Dendritic cell treated with granulocyte-macrophage colony-stimulating factor and Interleukin-4, amounts not matched to agents 40 ng/mL and 50 ng/mL, for 4 days (primary cell): ENCODE measurements at regions of chr12 and their contacts with region 1.

Region 1: GRCh38 chr12:14618983-14619382 is 51.3 kb upstream of the PLBD1 start:
- H3K4me3 Mint-ChIP-seq: no peak overlapping the region
- H3K27ac Mint-ChIP-seq: no peak overlapping the region
- H3K4me1 Mint-ChIP-seq: peaks cover 34% of the 10 kb centered on the region
- H3K27me3 Mint-ChIP-seq: no peaks in the 10 kb centered on the region

Region 2: DNA sequence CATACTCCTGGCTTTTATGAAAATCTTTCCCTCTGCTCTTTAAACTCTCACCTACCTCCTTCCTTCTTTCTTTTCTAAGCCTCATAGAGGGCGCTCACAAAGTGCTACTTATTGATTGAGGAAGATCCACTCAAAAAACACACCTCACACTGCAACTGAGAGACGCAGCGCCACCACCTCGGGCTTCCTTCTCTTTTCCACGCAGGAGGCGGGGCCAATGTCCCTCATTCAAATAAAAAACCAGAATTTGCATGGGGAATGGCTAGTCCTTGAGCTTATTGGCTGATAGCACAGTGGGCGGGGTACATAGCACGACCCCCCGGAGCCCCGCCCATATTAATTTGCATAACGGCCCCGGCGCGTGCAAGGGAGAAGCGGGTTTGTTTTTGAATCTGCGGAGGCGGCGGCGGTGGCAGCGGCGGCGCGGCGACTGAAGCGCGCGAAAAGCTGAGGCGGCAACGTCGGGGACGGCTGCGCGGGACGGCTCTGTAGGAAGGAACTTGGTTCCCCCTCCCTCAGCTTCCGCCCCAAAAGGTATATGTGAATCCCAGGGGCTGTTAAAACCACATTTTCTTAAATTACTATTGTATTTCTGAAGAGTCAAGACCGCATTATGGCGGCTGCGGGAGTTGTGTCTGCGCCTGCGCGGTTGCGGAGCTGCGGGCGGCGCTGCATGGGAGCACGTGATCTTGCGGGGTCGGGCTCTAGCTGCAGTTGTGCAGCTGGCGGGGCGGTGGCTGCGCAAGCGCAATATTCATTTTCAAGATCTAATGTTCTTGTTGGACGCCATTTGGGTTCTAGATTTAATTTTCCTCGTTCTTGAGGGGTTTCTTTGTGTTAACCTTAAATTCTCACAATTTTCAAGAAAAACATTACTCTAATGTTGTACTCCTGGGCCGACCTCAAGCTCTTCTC is 253.4 kb before region 1 on chr12 and contains the start of gene ATF7IP:
- intact Hi-C with region 1: loop called (anchors 10 kb)
- H3K4me3 Mint-ChIP-seq: peak within 1 kb of the TSS; percentile 74
- H3K27ac Mint-ChIP-seq: peak within 1 kb of the TSS; percentile 84
- H3K4me1 Mint-ChIP-seq: peaks cover 6% of the 10 kb centered on the region
- H3K27me3 Mint-ChIP-seq: no peaks in the 10 kb centered on the region

Region 3: DNA sequence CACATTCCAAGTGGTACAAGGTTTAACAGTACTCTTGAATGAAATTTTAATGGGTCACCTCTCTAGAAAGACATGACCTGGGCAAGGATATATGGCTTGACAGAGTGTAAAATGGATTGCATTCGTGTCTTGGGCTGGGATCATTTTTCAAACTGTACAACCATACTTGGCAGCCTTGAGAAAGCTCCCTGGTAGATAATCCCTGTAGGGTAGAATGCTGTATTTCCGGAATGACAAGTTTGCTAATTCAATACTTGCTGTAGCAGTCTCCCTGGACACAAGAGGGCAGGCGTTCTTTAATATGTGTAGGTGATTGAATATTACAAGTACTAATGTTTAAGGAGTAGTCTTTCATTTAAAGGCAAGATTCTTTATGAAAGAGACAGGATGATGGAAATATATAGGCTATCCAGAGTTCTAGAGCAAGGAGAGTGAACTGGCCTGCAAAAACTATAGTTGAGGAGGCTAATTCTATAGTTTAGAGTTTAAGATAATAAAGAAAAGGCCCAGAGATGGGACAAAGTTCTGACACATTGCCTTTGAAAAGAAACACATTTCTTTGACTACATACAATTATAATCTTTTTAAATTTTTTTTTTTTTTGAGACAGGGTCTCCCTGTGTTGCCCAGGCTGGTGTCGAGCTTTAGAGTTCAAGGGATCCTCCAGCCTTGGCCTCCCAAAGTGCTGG is 104.7 kb before region 1 on chr12:
- intact Hi-C with region 1: loop called (anchors 1 kb)
- H3K4me3 Mint-ChIP-seq: no peak overlapping the region
- H3K27ac Mint-ChIP-seq: no peak overlapping the region
- H3K4me1 Mint-ChIP-seq: peaks cover 9% of the 10 kb centered on the region
- H3K27me3 Mint-ChIP-seq: no peaks in the 10 kb centered on the region

Region 4: GRCh38 chr12:14567351-14568162 is 51.4 kb before region 1 on chr12 and contains the start of gene PLBD1:
- intact Hi-C with region 1: no loop called
- H3K4me3 Mint-ChIP-seq: peak within 1 kb of the TSS; percentile 77
- H3K27ac Mint-ChIP-seq: peak within 1 kb of the TSS; percentile 87
- H3K4me1 Mint-ChIP-seq: peaks cover 41% of the 10 kb centered on the region
- H3K27me3 Mint-ChIP-seq: no peaks in the 10 kb centered on the region

Region 5: GRCh38 chr12:14960548-14961465 is 341.8 kb after region 1 on chr12:
- intact Hi-C with region 1: no loop called
- H3K4me3 Mint-ChIP-seq: peak overlapping the region; percentile 97
- H3K27ac Mint-ChIP-seq: peak overlapping the region; percentile 99
- H3K4me1 Mint-ChIP-seq: peaks cover 69% of the 10 kb centered on the region
- H3K27me3 Mint-ChIP-seq: no peaks in the 10 kb centered on the region